HepG2 (cell line): ENCODE measurements at regions of chr11 and their contacts with region 1.

Region 1: GRCh38 chr11:60887556-60887955 is 18.8 kb downstream of the PRPF19 start:
- DNase-seq: peak; percentile 66
- ATAC-seq: peak; percentile 98
- H3K4me3 ChIP-seq: no peak overlapping the region
- H3K27ac ChIP-seq: no peak overlapping the region
- H3K4me1 ChIP-seq: no peaks in the 10 kb centered on the region
- H3K27me3 ChIP-seq: no peaks in the 10 kb centered on the region
- CTCF ChIP-seq: peak; percentile 95
- EP300 ChIP-seq: no peak
- POLR2A ChIP-seq: no peak
- RAD21 ChIP-seq: peak; percentile 93

Region 2: DNA sequence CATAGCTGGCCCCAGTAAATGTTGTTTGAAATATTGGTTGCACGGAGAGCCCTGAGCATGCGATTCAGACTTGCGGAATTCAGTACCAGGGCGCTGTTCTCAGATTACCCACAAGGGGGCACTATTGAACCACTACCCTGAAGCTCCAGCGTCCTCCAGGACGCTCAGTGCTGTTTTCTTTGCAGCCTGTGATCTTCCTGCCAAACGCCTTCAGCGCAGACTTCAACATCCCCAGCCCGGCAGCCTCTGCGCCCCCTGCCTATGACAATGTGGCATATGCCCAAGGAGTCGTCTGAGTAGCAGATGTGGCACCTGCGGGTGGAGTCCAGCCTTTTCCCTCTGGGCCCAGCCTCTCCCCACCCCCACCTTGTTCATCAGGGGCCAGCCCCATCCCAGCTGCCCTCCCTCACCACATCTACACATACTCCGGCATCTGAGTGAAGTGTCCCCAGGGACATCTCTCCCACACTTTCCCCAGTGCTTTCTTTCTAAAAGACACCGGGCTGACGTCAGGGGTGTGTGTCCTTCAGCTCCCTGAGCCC is 112.1 kb before region 1 on chr11:
- CTCF ChIA-PET with region 1: interaction called, 3 read pairs
- POLR2A ChIA-PET with region 1: no interaction called
- in situ Hi-C with region 1: no loop called
- intact Hi-C with region 1: loop called (anchors 5 kb)
- DNase-seq: peak; percentile 80
- ATAC-seq: peak; percentile 88
- H3K4me3 ChIP-seq: no peak overlapping the region
- H3K27ac ChIP-seq: no peak overlapping the region
- H3K4me1 ChIP-seq: no peaks in the 10 kb centered on the region
- H3K27me3 ChIP-seq: peaks cover 0 to 28% of the 10 kb centered on the region in 2 experiments; a peak in 1 of 5 replicates
- CTCF ChIP-seq: peak; percentile 85
- EP300 ChIP-seq: no peak
- POLR2A ChIP-seq: no peak
- RAD21 ChIP-seq: peak; percentile 74

Region 3: DNA sequence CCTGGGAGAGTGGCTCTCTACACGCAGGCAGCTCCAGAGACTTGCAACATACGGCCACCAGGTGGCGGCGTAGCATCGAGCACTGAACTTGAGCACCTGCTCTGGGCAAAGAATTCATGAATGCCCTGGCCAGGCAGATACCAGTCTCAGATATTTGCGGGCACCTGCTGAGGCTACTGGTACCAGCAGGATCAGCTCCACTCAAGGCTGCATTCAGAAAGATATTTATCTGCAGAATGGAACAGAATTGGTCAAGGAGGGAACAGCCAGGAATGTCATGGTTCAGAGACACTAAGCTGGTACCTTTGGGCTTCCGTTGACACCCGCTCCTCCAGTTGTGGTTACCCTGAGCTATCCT is 56.4 kb before region 1 on chr11:
- CTCF ChIA-PET with region 1: interaction called, 81 read pairs
- POLR2A ChIA-PET with region 1: interaction called, 13 read pairs
- in situ Hi-C with region 1: loop called (anchors 5 kb)
- intact Hi-C with region 1: loop called (anchors 1 kb)
- DNase-seq: peak; percentile 61
- ATAC-seq: peak; percentile 95
- H3K4me3 ChIP-seq: no peak overlapping the region
- H3K27ac ChIP-seq: no peak overlapping the region
- H3K4me1 ChIP-seq: peaks cover 12% of the 10 kb centered on the region; the same call in 1 of the 2 replicates
- H3K27me3 ChIP-seq: peaks cover 0 to 14% of the 10 kb centered on the region in 2 experiments; a peak in 2 of 5 replicates
- CTCF ChIP-seq: peak; percentile 94
- EP300 ChIP-seq: no peak
- POLR2A ChIP-seq: no peak
- RAD21 ChIP-seq: peak; percentile 95